ENCODE measurements at regions of chr16 and their contacts with region 1.

Region 1: GRCh38 chr16:2497116-2497630 is 16.6 kb upstream of the ATP6V0C start:
- DNase-seq: peak in 3 of 4 donors; percentile 59 to 64 (median 62)
- ATAC-seq: peak; percentile 13
- H3K4me3 ChIP-seq: no peak overlapping the region
- H3K27ac ChIP-seq: peak overlapping the region in 3 of 4 donors; percentile 51 to 71 (median 71)
- H3K4me1 ChIP-seq: peaks cover 61% of the 10 kb centered on the region
- H3K27me3 ChIP-seq: no peaks in the 10 kb centered on the region
- CTCF ChIP-seq: no peak
- POLR2A ChIP-seq: no peak

Region 2: GRCh38 chr16:1772736-1773584 is 724.2 kb before region 1 on chr16 and contains the starts of genes EME2 and MRPS34:
- intact Hi-C with region 1: no loop called
- DNase-seq: peak; percentile 86 to 87 (median 86)
- ATAC-seq: peak; percentile 76
- H3K4me3 ChIP-seq: peak within 1 kb of the TSS; percentile 77 to 95
- H3K27ac ChIP-seq: peak within 1 kb of the TSS; percentile 81 to 96 (median 94)
- H3K4me1 ChIP-seq: peaks cover 48% of the 10 kb centered on the region
- H3K27me3 ChIP-seq: no peaks in the 10 kb centered on the region
- CTCF ChIP-seq: peak; percentile 71 to 83 (median 73)
- POLR2A ChIP-seq: peak; percentile 47 to 77 (median 72)
- total RNA-seq, gene EME2: 13.5 to 33.3 TPM
- total RNA-seq, gene MRPS34: 51.4 to 99.6 TPM

Region 3: GRCh38 chr16:2273484-2273883 is 223.7 kb before region 1 on chr16:
- intact Hi-C with region 1: loop called (anchors 5 kb)
- DNase-seq: no peak
- ATAC-seq: no peak
- H3K4me3 ChIP-seq: no peak overlapping the region
- H3K27ac ChIP-seq: no peak overlapping the region
- H3K4me1 ChIP-seq: peaks cover 16% of the 10 kb centered on the region
- H3K27me3 ChIP-seq: no peaks in the 10 kb centered on the region
- CTCF ChIP-seq: no peak
- POLR2A ChIP-seq: no peak

Region 4: DNA sequence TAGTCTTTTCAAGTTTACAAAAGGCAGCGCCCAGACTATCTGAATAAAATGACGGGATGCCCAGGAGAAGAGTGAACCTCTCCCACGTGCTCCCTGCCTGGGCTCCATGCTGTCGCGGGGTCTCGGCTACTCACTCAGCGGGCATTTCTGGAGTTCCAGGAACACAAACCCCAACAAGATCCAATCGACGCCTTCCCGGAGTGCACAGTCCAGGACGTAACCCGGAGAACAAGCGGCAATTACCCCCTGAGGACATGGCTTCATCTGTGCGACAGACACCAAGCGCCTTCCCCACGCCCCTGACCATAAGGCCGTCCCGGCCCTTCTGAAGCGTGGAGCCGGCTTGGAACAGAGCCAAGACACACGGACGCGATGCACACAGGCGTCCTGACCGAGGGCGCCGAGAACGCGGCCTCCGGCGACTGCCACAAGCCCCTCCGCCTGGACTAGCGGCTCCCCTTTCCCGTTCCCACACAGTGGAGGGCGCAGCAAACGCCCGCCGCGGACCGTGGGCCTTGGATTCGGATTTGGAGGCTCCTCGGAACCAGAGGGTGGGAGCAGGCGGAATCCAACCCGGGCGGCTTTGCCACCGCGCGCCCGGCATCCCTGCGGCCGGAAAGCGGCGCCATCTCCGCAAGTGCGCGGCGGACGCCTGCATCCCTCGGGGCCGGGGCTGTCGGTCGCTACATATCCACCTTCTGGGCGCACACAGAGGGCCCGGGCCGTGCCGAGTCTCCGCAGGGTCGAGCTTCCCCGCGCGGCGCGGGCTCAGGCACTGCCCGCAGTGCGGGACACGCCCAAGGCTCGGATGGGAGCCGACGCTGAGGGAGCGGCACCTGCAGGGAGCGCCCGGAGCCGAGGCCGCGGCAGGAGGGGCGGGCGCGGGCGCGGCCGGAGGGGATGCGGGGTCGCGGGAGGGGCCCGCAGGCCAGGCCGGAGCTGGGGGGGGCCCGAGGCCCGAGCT is 157.4 kb before region 1 on chr16:
- intact Hi-C with region 1: loop called (anchors 5 kb)
- DNase-seq: peak; percentile 57 to 74 (median 67)
- ATAC-seq: peak; percentile 47
- H3K4me3 ChIP-seq: peak overlapping the region in 1 of 2 donors; percentile 81
- H3K27ac ChIP-seq: peak overlapping the region in 2 of 4 donors; percentile 39 to 56
- H3K4me1 ChIP-seq: peaks cover 16% of the 10 kb centered on the region
- H3K27me3 ChIP-seq: no peaks in the 10 kb centered on the region
- CTCF ChIP-seq: peak in 3 of 7 experiments; percentile 3 to 17 (median 9)
- POLR2A ChIP-seq: no peak

Region 5: DNA sequence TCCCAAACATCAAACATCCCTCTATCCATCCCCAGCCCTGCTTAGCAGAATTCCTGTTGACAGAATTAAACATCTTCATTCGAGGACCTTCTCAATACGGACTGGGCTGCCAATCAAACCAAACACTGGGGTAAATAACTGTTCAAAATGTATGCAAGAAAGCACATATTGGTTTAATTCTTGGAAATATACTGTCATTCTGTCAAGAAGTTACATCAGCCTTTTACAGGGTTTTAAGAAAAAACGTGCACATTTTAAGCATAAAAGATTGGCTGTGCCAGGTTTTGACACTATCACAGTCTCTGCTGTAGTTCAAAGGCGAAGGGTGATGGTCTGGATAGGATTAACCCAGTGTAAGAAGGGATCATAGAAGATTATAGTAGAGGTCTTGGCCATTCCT is 93.1 kb before region 1 on chr16:
- intact Hi-C with region 1: no loop called
- DNase-seq: no peak
- ATAC-seq: no peak
- H3K4me3 ChIP-seq: no peak overlapping the region
- H3K27ac ChIP-seq: no peak overlapping the region
- H3K4me1 ChIP-seq: peaks cover under 1% of the 10 kb centered on the region
- H3K27me3 ChIP-seq: no peaks in the 10 kb centered on the region
- CTCF ChIP-seq: no peak
- POLR2A ChIP-seq: no peak

Region 6: DNA sequence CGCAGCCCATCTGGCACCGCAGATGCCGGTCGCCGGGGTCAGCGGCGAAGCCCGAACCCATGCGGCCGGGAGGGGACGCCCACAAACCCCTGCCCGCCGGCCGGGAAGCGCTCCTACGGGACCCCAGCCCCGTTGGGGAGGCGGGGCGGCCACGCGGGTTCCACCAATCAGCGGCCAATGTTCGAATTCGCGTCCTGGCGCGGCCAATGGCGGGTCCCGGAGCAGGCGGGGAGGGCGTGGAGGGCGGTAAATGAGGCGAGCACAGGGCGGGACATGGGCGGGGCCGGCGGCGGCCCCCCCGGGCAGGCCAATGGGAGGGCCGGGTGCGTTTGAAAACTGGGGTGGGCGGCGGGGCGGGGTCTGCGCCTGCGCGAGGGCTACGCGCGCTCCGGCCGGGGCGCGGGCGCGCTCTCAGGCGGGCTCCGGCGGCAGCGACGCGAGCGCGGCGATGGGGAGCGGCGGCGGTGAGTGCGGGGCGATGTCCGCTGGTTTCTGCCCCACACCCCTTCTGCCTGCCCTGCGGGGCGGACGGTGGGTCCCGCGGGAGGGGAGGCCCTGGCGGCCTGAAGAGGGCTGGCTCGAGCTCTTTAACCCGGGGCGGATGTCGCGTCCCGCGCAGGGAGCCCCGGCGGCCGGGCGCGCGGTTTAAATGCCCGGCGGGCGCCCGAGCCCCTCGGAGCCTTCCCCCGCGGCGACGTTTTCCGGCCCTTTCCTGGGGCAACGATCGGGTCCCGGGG is 68.0 kb before region 1 on chr16 and contains the start of gene CCNF:
- intact Hi-C with region 1: loop called (anchors 10 kb)
- DNase-seq: peak; percentile 98
- ATAC-seq: peak; percentile 98
- H3K4me3 ChIP-seq: peak within 1 kb of the TSS; percentile 45 to 56
- H3K27ac ChIP-seq: peak within 1 kb of the TSS; percentile 37 to 83 (median 62)
- H3K4me1 ChIP-seq: peaks cover 18% of the 10 kb centered on the region
- H3K27me3 ChIP-seq: no peaks in the 10 kb centered on the region
- CTCF ChIP-seq: peak in 4 of 7 experiments; percentile 9 to 49 (median 24)
- POLR2A ChIP-seq: peak in 2 of 3 donors; percentile 55 to 60
- total RNA-seq, gene CCNF: 0.99 to 2.3 TPM

Region 7: DNA sequence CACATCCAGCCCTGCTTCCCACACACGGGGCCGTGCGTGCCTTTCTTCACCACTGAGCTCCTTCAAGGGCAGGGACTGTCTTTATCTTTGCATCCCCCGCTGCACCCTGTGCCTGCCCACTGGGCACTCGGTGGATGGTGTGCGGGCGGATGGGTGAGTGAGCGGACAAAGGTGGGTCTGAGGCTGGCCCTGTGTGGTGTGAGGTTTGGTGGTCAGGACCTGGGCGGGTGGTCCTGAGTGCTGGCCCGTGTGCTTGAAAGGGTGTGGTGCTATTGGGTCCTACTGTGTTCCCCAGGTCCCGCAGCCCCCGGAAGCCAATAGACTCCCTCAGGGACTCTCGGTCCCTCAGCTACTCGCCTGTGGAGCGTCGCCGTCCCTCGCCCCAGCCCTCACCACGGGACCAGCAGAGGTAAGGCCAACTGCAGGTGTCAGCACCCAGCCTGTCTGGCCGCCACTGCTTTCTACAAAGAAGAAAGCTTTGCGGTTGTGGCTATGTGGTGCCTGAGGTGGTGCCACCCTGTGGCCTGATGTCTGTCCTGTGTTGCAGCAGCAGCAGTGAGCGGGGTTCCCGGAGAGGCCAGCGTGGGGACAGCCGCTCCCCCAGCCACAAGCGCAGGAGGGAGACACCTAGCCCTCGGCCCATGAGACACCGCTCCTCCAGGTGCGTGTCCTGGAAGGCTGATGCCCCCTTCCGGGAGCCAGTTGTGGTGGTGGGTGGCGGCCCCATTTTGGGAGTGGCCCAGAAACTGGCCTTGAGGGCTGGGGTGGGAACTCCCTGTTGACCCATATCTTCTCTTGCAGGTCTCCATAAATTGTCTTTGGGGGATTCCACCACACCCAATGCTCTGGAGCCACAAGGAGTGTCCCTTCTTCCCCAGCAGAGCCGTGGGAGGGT is 273.1 kb after region 1 on chr16:
- intact Hi-C with region 1: no loop called
- DNase-seq: peak in 1 of 4 donors; percentile 7
- ATAC-seq: no peak
- H3K4me3 ChIP-seq: no peak overlapping the region
- H3K27ac ChIP-seq: no peak overlapping the region
- H3K4me1 ChIP-seq: peaks cover 12% of the 10 kb centered on the region
- H3K27me3 ChIP-seq: no peaks in the 10 kb centered on the region
- CTCF ChIP-seq: no peak
- POLR2A ChIP-seq: no peak